Heart left ventricle (tissue), 16 donors: ENCODE measurements at regions of chr12 and their contacts with region 1.

Region 1: DNA sequence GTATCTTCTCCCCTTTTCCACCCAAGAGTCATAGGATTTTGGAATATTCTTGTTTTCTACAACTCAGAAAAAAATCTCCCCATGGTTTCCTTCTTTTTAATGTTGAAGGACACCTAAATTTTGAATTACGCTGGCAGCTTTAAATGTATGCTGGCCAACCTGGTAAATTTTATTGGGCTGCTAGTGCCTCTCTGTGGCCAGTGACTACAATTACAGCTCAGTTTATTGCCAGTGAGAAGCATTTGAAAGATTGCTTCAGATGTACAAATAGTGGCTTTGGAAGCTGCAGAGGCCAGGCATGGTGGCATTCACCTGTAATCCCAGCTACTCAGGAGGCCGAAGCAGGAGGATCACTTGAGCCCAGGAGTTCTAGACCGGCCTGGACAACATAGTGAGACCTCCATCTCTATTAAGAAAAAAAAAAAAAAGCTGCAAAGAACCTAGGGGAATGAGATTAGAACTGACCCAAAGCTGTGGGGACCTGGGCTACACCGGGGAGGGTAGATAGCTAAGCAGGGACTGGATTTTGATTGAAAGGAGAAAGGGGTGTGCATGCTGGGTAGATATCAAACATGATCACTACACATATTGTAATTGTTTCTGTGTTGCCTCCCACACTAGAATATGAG is 7.6 kb upstream of the RAB21 start:
- DNase-seq: peak in 2 of 5 donors; percentile 23 to 29
- ATAC-seq: peak in 3 of 4 donors; percentile 73 to 90 (median 86)
- H3K4me3 ChIP-seq: no peak overlapping the region
- H3K27ac ChIP-seq: no peak overlapping the region
- H3K4me1 ChIP-seq: no peaks in the 10 kb centered on the region
- H3K27me3 ChIP-seq: peaks cover 0 to 8% (median 0%) of the 10 kb centered on the region in 9 donors
- CTCF ChIP-seq: peak; percentile 49 to 80 (median 70)
- POLR2A ChIP-seq: no peak

Region 2: DNA sequence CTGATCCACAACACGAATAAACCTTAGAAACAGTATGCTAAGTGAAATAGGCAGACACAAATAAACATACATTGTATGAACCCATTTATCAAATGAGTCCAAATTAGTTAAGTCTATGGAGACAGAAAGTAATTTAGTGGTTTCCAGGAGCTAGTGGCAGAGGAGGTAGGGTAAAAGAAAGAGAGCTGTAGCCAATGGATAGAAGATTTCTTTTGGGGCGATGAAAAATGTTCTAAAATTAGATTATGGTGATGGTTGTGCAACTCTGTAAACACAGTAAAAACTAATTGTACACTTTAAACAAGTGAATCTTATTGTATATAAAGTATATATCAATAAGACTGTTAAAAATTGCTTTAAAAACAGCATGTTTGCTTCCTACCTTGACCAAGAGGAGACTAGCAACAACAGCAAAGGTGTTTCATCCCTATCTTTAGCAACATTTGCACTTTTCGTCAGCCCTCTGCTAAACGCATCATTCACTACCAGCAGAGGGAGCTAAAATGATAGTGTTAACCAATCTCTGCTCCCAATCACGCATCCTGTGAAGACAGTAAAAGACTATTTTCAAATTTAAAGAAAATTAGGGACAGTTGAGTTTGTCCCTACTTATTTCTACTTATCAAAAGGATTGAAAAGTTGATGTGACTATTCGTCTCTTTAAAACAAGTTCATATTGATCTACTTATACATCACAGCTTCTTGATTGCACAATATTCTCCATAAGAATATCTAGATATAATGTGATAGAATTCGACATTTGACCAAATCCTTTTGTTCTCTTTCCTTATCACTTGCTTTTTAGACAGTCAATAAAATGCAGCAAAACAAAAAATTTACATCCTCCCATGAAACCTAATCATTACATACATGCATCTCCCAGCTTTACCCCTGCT is 331.5 kb before region 1 on chr12:
- intact Hi-C with region 1: loop called (anchors 2 to 5 kb)
- DNase-seq: no peak
- ATAC-seq: peak in 3 of 4 donors; percentile 44 to 71 (median 55)
- H3K4me3 ChIP-seq: no peak overlapping the region
- H3K27ac ChIP-seq: no peak overlapping the region
- H3K4me1 ChIP-seq: no peaks in the 10 kb centered on the region
- H3K27me3 ChIP-seq: peaks cover 0 to 3% (median 0%) of the 10 kb centered on the region in 9 donors
- CTCF ChIP-seq: peak; percentile 51 to 79 (median 72)
- POLR2A ChIP-seq: no peak

Region 3: GRCh38 chr12:71636704-71637115 is 110.4 kb before region 1 on chr12:
- intact Hi-C with region 1: loop called in 6 of 10 experiments (anchors 5 to 10 kb)
- DNase-seq: no peak
- ATAC-seq: peak in 1 of 4 donors; percentile 42
- H3K4me3 ChIP-seq: no peak overlapping the region
- H3K27ac ChIP-seq: no peak overlapping the region
- H3K4me1 ChIP-seq: peaks cover 0 to 5% (median 0%) of the 10 kb centered on the region in 12 donors
- H3K27me3 ChIP-seq: no peaks in the 10 kb centered on the region
- CTCF ChIP-seq: peak; percentile 54 to 84 (median 68)
- POLR2A ChIP-seq: no peak

Region 4: DNA sequence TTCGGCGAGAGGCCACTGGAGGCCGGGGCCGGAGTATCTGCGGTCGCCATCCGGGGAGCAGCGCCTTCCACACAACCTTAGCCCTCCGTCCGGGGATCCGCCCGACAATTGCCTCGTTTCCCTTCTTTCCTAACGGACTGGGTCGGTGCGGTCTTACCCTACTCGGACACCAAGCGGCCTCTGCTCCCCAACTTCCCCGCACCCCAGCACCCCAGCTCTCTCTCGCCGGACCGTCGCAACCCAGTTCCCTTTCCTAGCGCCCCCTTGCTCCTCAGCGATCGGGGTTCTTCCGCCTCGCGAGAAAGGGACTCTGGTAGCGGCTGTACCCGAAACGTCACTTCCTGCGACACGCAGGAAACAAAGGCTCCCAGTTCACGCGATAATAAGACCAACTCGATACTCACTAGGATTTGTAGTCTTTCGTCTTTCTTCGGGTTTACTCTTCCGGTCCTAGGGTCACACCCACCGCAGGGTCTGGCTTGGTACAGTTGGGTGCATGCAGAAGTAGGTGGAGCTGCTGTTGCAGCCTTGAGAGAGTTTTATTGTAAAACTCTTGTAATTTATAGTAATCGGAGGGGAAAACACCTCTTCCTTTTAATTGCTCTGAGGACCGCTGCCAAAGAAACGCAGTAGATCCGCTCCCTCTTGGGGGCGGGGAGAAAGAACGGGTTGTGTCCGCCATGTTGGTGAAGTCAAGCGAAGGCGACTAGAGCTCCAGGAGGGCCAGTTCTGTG is 83.4 kb before region 1 on chr12 and contains the start of gene ZFC3H1:
- intact Hi-C with region 1: loop called in 4 of 10 experiments (anchors 5 to 10 kb)
- DNase-seq: peak; percentile 93 to 97 (median 96)
- ATAC-seq: peak; percentile 96 to 98 (median 96)
- H3K4me3 ChIP-seq: peak within 1 kb of the TSS; percentile 70 to 97 (median 88)
- H3K27ac ChIP-seq: peak within 1 kb of the TSS; percentile 89 to 98 (median 94)
- H3K4me1 ChIP-seq: peaks cover 0 to 44% (median 28%) of the 10 kb centered on the region in 12 donors
- H3K27me3 ChIP-seq: no peaks in the 10 kb centered on the region
- CTCF ChIP-seq: peak in 6 of 12 donors; percentile 19 to 60 (median 40)
- POLR2A ChIP-seq: peak; percentile 32 to 81
- total RNA-seq, gene ZFC3H1: 15.6 to 27.3 (median 18.2) TPM

Region 5: DNA sequence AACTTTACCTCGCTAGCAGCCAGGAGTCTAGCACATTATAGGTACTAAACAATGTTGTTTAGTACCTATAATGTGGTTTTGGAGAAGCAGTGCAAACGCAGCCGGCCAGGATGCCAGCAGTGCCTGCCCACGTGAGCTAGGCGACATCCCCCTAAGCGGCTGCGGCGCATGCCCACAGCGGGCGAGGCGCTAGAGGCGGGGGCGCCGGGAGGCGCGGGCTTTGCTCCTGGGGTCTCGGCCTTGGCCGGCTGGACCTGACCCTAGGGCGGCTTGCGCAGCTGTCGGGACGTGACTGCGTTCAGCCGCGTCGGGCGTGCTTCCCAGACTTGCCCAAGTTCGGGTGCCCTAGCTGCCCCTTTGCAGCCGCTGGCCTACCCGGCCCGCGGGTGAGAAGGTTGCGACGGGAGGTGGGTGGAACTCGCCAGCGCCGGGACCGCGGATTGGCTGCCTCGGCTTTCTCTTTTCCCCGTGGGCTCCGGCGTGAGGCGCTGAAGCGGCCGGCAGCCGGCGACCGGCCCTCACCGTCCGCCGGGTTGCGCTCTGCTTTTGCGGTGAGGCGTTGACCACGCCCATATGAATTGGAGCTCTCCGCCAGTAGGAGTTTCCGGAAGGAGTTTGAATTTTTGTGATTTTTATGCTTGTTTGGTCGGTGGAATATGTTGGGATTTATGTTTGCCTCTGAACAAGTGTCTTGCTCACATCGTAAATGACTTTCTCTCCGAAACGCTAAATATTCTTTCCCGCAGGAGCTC is 61.0 kb before region 1 on chr12 and contains the start of gene TMEM19:
- intact Hi-C with region 1: loop called in 5 of 10 experiments (anchors 5 to 10 kb)
- DNase-seq: peak; percentile 92 to 95 (median 93)
- ATAC-seq: peak; percentile 95 to 99 (median 99)
- H3K4me3 ChIP-seq: peak within 1 kb of the TSS; percentile 50 to 88 (median 78)
- H3K27ac ChIP-seq: peak within 1 kb of the TSS; percentile 54 to 99 (median 94)
- H3K4me1 ChIP-seq: peaks cover 0 to 46% (median 20%) of the 10 kb centered on the region in 12 donors
- H3K27me3 ChIP-seq: no peaks in the 10 kb centered on the region
- CTCF ChIP-seq: peak in 5 of 12 donors; percentile 17 to 61 (median 47)
- POLR2A ChIP-seq: peak in 1 of 2 donors; percentile 76
- total RNA-seq, gene TMEM19: 15.5 to 39.5 (median 28.8) TPM

Region 6: DNA sequence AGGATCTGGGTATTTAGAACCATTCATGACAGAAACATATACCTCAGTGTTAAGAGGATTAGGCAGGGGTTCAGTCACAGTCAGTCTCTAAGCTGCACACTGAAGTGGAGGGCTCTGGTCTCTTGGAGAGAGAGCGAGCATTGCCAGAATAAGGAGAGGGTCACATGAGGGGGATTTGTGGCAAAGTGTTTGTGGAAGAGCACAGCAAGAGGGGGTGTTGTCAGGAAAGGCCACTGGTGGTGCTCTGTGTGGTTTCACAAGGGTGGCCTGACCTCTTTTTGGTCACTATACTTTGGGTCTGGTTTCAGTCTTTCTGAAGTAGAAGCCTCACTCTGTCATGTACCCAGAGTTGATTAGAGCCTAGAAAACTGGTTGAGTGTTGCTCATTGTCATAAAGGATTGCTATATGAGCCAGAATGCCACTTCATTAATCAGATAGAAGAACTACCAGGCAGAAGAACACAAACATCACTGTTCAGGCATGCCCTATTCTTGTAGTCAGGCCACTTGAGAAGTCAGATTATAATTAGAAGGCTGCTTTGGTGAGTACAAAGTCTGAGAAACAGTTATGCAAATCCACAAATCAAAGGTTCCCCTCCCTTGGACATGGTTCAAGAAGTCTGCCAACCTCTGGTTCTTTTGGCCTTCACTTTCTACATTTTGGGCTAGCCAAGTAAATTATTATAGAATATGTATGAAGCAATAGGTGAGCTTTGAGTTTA is 52.8 kb before region 1 on chr12:
- intact Hi-C with region 1: loop called in 5 of 10 experiments (anchors 5 to 10 kb)
- DNase-seq: no peak
- ATAC-seq: peak; percentile 65 to 90 (median 82)
- H3K4me3 ChIP-seq: no peak overlapping the region
- H3K27ac ChIP-seq: peak overlapping the region; percentile 9 to 64 (median 40)
- H3K4me1 ChIP-seq: peaks cover 0 to 27% (median 2%) of the 10 kb centered on the region in 12 donors
- H3K27me3 ChIP-seq: no peaks in the 10 kb centered on the region
- CTCF ChIP-seq: no peak
- POLR2A ChIP-seq: no peak

Region 7: GRCh38 chr12:71768900-71769299 is 21.8 kb after region 1 on chr12:
- intact Hi-C with region 1: no loop called
- DNase-seq: no peak
- ATAC-seq: no peak
- H3K4me3 ChIP-seq: no peak overlapping the region
- H3K27ac ChIP-seq: no peak overlapping the region
- H3K4me1 ChIP-seq: peaks cover 5 to 71% (median 55%) of the 10 kb centered on the region in 12 donors
- H3K27me3 ChIP-seq: no peaks in the 10 kb centered on the region
- CTCF ChIP-seq: no peak
- POLR2A ChIP-seq: no peak